ENCODE measurements at regions of chr1 and their contacts with region 1.

Region 1: DNA sequence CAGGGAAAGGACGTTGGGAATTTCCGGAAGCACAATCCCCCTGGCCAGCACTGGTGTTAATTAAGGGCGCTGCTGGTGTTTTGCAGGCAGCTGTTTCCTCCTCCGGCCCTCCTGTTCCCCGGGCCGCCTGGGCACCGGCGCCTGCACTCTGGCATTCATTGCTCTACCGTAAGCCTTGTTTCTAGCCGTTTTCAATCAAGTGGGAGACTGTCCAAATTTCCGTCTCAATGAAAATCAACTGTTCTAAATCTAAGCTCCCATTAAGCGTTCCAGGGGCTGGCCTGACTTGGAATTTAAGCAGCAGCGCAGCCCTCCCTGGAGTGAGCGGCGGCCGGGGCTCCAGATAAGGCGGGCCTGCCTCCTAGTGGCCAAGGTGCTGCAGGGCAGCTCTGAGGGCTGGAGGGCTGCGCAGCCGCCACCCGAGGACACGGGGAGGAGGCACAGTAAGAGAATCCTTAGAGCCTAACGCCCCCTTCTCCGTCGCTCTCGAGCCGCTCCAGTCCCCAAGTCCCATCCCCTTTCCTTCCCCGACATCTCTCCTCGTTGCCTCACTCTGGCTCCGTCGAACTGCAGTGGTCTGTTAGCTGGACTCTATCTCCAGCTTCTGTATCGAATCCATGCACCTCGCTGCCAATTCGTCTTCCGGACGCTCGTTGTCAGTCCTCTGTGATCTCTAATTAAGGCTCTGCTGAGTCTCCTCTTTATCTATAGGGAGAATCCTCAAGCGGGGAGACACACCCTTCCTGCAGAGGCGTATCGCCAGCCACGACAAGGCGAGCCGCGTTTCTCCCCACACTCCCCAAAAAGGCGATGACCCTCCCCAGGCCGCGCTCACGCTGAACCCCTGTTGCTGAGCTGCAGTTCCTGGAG is 57.8 kb upstream of the LRRC8D start:
- DNase-seq: peak; percentile 73
- H3K4me3 ChIP-seq: peak overlapping the region; percentile 70
- H3K27ac ChIP-seq: no peak overlapping the region
- H3K27me3 ChIP-seq: no peaks in the 10 kb centered on the region
- CTCF ChIP-seq: peak; percentile 100

Region 2: DNA sequence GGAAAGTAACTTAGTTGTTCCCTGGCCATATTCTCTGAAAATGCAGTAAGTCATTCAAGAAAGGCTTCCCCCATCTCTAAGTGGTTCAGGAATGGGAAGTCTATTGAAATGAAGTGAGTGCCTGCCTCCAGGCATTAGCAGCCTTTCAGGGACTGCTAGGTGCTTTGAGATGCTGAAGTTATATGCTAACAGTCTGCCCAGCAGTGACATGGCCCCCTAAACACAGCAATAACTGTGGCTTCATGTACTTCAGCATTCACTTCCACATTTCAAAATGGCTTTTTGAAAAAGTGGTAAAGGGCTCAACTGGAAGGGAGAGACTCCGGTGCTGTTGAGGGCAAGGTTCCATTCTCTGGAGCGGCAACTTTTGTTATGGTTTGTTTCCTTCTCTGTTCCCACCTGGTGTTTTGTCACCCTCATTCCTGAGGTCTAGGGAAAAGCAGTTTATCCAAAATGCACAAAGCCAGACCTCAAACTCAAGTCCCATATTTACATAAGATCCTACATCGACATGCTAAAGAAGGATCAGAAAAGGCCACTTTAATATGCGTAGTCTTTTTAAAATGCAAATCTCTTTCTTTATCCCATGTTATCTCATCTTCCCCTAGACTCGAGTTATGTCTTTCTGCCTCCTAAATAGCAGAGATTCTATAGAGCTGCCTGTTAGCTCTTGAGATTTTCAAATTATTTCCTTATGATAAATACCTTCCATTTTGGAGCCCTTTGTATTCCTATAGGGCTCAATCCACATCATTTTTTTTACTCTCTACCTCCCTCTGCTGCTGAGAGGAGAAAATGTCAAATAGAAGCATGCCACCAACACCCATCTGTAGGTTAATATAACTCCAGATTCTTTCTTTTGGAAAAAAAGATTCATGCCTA is 164.3 kb before region 1 on chr1:
- CTCF ChIA-PET with region 1: interaction called, 59 read pairs
- POLR2A ChIA-PET with region 1: no interaction called
- DNase-seq: no peak
- H3K4me3 ChIP-seq: no peak overlapping the region
- H3K27ac ChIP-seq: no peak overlapping the region
- H3K27me3 ChIP-seq: no peaks in the 10 kb centered on the region
- CTCF ChIP-seq: peak; percentile 69

Region 3: DNA sequence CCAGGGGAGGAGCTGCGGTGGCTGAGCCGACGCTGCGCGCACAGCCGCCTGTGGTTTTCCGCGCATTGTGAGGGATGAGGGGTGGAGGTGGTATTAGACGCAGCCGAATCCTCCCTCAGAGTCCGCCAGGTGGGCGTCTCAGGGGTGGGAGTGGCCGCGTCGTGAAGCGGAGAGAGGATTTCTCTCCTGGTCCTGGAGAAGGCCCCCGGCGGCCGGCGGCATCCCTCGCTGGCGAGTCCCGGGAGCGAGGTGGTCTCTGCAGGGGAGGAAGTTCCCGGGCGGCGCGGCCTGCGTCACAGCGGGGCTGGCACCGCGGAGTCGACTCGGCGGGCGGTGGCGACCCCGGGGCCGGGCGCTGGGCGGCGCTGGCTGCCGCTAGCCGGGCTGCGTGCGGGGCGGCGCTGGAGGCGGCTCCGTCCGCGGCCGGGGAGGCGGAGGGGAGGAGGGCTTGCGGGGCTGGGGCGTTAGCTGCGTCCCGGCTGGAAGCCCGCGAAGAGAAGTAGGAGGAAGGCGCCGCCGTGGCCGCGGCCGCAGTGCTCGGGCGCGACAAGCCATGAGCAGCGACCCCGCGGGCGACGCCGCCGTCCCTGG is 130.3 kb before region 1 on chr1 and contains the start of gene LRRC8C:
- CTCF ChIA-PET with region 1: interaction called, 207 read pairs
- POLR2A ChIA-PET with region 1: interaction called, 9 read pairs
- DNase-seq: peak; percentile 23
- H3K4me3 ChIP-seq: peak within 1 kb of the TSS; percentile 88
- H3K27ac ChIP-seq: peak within 1 kb of the TSS; percentile 59
- H3K27me3 ChIP-seq: no peaks in the 10 kb centered on the region
- CTCF ChIP-seq: no peak
- polyA plus RNA-seq, gene LRRC8C: 15.3 and 19.4 TPM in 2 replicates

Region 4: DNA sequence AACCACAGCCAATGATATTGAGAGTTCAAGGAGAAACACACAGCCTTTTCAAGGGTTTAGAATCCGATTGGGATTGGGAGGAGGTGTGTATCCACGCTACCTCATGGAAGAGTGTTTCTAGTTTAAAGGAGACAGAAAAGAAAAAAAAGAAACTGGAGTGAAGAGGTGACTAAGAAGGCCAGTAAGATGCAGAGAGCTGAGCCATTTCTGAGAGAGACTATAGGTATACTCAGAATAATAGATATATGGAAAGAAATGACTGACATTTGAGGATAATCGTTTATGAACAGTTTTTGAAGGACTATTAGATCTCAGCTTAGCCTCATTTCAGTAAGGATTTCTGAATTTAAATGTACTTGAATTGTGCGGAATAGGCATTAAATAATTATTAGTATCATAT is 87.3 kb before region 1 on chr1:
- CTCF ChIA-PET with region 1: interaction called, 15 read pairs
- POLR2A ChIA-PET with region 1: no interaction called
- DNase-seq: no peak
- H3K4me3 ChIP-seq: no peak overlapping the region
- H3K27ac ChIP-seq: no peak overlapping the region
- H3K27me3 ChIP-seq: no peaks in the 10 kb centered on the region
- CTCF ChIP-seq: no peak

Region 5: DNA sequence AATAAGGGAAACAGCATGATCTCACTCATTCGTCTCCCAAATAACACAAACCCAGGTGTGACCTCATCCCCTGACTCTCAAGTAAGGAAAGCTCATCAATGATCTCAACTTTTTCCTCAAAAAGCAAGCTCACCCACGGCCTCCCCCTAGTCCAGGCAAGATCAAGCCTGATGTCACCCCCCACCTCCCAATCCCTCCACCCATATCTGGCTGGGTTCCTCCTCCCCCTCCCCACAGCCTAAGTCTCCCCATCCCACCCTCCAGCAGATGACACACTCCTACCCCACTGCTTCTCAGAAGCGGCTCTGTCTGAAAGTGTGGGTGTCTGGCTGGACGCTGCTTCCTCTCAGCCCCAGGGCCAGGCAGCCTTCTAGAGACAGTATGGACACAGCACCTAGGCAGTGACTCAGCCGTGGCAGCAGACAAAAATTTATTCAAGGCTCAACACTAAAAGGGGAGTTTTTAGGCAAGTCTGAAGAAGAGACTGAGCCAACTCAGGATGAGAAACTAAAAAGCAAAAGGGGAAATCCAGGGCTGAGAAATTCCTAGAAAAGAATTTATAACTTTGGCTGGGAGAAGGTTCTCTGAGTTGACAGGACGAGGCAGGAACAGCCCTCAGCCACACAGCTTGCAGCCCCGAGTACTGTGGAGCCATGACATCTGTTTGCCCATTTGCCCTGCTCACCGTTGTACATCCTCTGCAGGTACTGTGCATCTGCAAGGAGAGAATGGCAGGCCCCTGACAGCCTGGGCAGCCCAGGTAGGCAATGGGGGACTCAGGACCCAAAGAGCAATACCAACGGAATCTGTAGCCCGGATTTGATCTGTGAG is 23.8 kb before region 1 on chr1:
- CTCF ChIA-PET with region 1: interaction called, 40 read pairs
- POLR2A ChIA-PET with region 1: no interaction called
- DNase-seq: no peak
- H3K4me3 ChIP-seq: no peak overlapping the region
- H3K27ac ChIP-seq: no peak overlapping the region
- H3K27me3 ChIP-seq: no peaks in the 10 kb centered on the region
- CTCF ChIP-seq: no peak

Region 6: DNA sequence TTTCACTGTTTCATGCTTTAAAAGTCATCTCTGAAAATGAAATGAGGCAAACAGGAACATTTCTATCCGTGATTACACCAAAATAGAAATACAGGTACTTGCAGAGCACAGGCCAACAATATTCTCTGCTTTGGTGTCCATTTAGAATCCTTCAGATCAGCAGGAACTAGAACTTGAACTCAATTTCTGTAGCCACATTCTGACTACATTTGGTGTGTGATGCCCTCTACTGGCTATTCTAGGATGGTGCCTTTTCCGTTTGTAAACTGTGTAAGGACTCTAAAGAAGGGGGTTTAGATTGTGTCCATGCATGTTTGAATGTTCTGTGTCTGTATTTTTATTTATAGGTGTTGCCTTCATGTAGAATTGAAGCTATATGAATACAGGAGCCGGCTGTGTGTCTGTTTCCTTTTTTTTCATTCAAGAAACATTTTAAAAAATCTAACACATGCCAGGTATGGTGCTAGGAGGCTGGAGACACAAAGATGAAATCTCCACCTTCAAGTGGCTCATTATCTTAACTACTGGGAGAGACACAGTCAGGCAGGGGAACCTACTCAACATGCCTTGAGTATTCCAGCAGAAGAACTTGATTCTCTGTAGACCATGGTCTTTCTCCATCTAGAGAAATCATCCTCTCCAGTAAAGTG is 224.3 kb after region 1 on chr1:
- CTCF ChIA-PET with region 1: interaction called, 14 read pairs
- POLR2A ChIA-PET with region 1: no interaction called
- DNase-seq: peak; percentile 56
- H3K4me3 ChIP-seq: no peak overlapping the region
- H3K27ac ChIP-seq: no peak overlapping the region
- H3K27me3 ChIP-seq: no peaks in the 10 kb centered on the region
- CTCF ChIP-seq: peak; percentile 87

Measured in AG04450 (cell line).